Dorsolateral prefrontal cortex (tissue), 120 donors: ENCODE measurements at regions of chr3 and their contacts with region 1.

Region 1: DNA sequence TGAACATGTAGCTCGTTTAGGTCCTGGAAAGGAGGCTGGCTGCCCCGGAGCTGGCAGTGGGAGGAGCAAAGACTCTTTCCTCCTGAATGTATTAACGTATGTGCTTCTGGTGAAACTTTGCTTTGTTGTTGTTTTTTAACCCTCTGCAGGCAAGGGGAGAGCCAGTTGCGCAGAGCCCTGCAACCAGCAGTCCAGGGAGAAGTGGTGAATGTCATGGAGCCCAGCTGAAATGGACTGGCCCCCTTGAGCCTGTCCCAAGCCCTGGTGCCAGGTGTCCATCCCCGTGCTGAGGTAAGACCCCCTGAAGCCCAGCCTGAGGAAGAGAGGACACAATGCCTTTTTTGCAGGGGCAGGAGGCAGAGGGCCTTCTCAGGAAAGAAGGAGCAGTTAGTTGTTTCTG is 33.3 kb downstream of the ST6GAL1 start:
- DNase-seq: no peak
- H3K4me3 ChIP-seq: no peak overlapping the region
- H3K27ac ChIP-seq: peak overlapping the region in 18 of 59 donors; percentile 3 to 83 (median 33)
- H3K27me3 ChIP-seq: no peaks in the 10 kb centered on the region
- CTCF ChIP-seq: no peak

Region 2: DNA sequence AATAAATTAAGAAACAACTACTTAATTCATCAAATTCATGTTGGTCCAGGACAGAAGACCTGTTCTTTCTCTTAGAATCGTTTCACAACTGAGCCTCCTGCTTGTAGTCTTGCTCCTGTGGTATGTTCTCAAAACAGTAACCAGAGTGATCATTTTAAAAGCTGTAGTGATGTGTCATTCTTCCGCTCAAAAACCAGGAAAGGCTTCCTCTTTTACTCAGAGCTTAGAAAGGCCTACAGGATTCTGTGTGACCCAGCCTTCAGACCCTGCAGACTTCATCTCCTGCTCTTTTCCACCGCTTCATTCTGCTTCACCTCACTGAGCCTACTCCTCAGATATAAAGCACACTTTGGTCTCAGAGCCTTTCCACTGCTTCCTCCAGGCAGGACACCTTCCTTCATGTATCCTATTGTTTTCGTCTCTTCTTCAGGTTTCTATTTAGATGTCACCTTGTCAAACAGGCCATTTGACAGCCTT is 10.6 kb before region 1 on chr3:
- intact Hi-C with region 1: loop called in 1 of 2 experiments (anchors 1 kb)
- DNase-seq: no peak
- H3K4me3 ChIP-seq: no peak overlapping the region
- H3K27ac ChIP-seq: peak overlapping the region in 38 of 59 donors; percentile 13 to 77 (median 44)
- H3K27me3 ChIP-seq: no peaks in the 10 kb centered on the region
- CTCF ChIP-seq: no peak